ENCODE measurements at regions of chr3 and their contacts with region 1.

Region 1: DNA sequence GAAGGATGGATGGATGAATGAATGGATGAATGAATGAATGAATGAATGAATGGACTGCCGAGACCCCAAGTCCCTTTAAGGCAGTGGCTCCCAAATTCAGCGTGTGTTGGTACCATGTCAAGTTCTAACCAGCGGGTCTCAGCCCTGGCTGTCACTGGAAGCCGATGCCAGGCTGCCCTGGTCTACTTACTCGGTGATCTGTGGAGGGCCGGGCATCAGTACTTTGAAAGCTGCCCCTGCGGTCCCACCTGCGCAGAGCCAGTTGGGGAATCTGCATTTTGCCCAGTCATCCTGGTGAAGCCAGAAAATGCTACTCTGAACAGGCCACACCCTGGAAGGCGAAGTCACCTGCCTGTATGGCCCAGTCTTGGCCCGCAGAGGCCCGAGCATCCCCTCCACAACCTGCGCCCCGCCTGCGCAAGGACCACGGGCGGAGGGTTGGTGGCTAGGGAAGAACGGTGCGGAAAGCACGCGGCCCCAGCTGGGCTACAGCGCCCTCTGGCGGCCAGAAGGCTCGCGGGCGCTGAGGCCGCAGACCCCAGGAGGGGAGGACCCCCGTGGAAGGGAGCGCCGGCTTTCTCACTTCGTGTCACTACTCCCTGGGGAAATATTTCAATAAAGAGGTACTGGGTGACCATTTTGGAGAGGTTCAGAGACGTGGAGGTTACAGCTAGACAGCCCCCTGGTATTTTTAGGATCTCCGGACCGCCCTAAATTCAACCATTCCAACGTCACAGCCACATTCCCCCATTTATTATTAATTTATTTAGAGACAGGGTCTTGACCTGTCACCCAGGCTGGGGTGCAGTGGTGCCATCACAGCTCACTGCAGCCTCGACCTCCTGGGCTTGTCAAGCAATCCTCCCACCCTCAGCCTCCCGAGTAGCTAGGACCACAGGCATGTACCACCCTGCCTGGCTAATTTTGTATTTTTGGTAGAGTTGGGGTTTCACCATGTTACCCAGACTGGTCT is 34.9 kb downstream of the PRKCD start:
- DNase-seq: no peak
- H3K4me3 ChIP-seq: no peak overlapping the region
- H3K27ac ChIP-seq: no peak overlapping the region
- H3K4me1 ChIP-seq: peaks cover 3 to 35% of the 10 kb centered on the region in 2 donors
- H3K27me3 ChIP-seq: no peaks in the 10 kb centered on the region
- CTCF ChIP-seq: peak; percentile 95 to 100 (median 99)

Region 2: DNA sequence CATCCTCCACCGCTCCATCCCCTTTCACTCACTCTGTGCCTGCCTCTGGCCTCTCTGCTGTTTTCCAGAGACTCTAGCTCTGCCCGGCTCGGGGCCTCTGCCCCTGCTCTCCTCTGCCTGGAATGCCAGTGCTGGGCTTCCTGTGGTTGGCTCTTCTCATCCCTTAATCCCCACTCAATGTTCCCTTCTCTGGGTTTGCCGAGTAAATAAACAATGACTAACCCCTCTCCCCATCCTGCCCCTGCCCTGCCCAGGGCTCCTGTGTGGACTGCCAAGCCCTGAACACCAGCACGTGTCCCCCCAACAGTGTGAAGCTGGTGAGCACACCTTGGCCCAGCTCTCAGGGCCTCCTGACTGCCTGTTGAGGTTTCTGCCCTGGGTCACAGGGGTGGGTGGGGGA is 688.5 kb before region 1 on chr3:
- intact Hi-C with region 1: no loop called
- DNase-seq: no peak
- H3K4me3 ChIP-seq: no peak overlapping the region
- H3K27ac ChIP-seq: no peak overlapping the region
- H3K4me1 ChIP-seq: no peaks in the 10 kb centered on the region
- H3K27me3 ChIP-seq: no peaks in the 10 kb centered on the region
- CTCF ChIP-seq: no peak

Region 3: DNA sequence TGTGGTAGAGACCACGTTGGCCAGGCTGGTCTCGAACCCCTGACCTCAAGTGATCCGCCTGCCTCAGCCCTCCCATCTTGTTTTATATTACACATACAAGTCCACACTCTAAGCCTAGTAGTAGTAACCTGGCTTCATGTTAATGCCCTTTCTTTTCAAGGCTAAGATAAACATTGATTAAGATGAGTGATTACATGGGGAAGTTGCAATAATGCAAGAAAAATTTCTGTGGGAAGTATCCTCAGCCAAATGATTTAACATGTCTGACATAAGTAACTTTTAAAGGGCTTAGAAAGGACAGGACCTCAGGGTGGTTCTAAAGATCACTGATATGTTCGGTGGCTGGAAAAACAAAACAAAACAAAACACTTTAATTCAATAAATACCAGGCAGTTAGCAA is 222.1 kb before region 1 on chr3:
- intact Hi-C with region 1: no loop called
- DNase-seq: no peak
- H3K4me3 ChIP-seq: no peak overlapping the region
- H3K27ac ChIP-seq: no peak overlapping the region
- H3K4me1 ChIP-seq: no peaks in the 10 kb centered on the region
- H3K27me3 ChIP-seq: no peaks in the 10 kb centered on the region
- CTCF ChIP-seq: no peak

Region 4: GRCh38 chr3:53114011-53114400 is 81.9 kb before region 1 on chr3:
- intact Hi-C with region 1: loop called (anchors 1 kb)
- DNase-seq: peak; percentile 17 to 90
- H3K4me3 ChIP-seq: no peak overlapping the region
- H3K27ac ChIP-seq: no peak overlapping the region
- H3K4me1 ChIP-seq: no peaks in the 10 kb centered on the region
- H3K27me3 ChIP-seq: no peaks in the 10 kb centered on the region
- CTCF ChIP-seq: peak; percentile 85 to 93 (median 87)

Region 5: GRCh38 chr3:53130179-53131061 is 65.5 kb before region 1 on chr3 and contains the start of gene RFT1:
- intact Hi-C with region 1: loop called (anchors 1 kb)
- DNase-seq: peak; percentile 96 to 100
- H3K4me3 ChIP-seq: peak within 1 kb of the TSS; percentile 93 to 96
- H3K27ac ChIP-seq: peak within 1 kb of the TSS; percentile 81 to 93
- H3K4me1 ChIP-seq: peaks cover 3 to 12% of the 10 kb centered on the region in 2 donors
- H3K27me3 ChIP-seq: no peaks in the 10 kb centered on the region
- CTCF ChIP-seq: peak in 1 of 3 experiments; percentile 27
- total RNA-seq, gene RFT1: 12.1 TPM

Region 6: GRCh38 chr3:53160660-53161449 is 35.0 kb before region 1 on chr3 and contains the start of gene PRKCD:
- intact Hi-C with region 1: loop called (anchors 2 kb)
- DNase-seq: peak; percentile 59 to 95
- H3K4me3 ChIP-seq: peak within 1 kb of the TSS; percentile 88 to 90
- H3K27ac ChIP-seq: peak within 1 kb of the TSS; percentile 81 to 93
- H3K4me1 ChIP-seq: peaks cover 6 to 23% of the 10 kb centered on the region in 2 donors
- H3K27me3 ChIP-seq: no peaks in the 10 kb centered on the region
- CTCF ChIP-seq: peak; percentile 68 to 81 (median 80)
- total RNA-seq, gene PRKCD: 36.3 TPM

Region 7: DNA sequence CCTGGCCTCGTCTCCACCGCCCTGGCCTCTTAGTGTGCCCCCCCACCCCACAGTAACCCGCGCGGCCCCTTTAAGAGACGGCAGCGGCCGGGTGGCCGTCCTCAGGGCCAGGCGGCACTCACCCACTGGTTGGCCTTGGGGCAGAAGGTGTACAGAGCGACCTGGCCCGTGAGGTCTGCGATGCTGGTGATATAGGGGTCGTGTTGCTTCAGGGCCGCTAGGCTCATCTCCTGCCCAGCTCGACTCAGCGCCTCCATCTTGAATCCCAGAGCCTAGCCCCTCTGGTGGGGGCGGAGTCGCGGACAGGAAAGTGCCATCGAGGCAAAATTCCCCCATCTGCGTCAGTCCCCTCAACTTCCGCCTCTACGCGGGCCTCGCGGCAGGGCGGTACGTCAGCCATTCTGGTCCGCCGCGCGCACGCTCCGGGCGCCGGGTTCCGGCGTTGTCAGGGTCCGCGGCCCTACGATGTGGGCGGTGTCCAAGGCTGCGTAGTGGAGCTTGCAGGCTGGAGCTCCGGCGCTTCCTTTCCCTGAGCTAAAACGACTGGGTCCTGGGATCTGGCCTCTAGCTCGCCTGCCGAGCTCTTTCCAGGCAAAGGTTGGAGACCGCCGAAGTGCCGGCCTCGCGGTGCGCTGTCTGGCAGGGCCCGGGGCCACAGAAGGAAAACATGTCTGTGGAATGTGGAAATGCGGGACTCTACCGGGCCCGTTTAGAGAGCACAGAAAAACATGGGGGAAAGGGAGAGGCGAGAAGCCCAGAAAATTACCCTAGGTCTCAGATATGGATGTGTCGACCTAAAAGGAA is 151.6 kb after region 1 on chr3 and contains the start of gene DCP1A:
- intact Hi-C with region 1: no loop called
- DNase-seq: peak; percentile 73 to 98
- H3K4me3 ChIP-seq: peak within 1 kb of the TSS; percentile 74 to 99
- H3K27ac ChIP-seq: peak within 1 kb of the TSS; percentile 97 to 99
- H3K4me1 ChIP-seq: peaks cover 0 to 4% of the 10 kb centered on the region in 2 donors
- H3K27me3 ChIP-seq: no peaks in the 10 kb centered on the region
- CTCF ChIP-seq: no peak
- total RNA-seq, gene DCP1A: 21.7 TPM

Measured in ascending aorta (tissue), 2 donors.